ENCODE measurements at regions of chr18 and their contacts with region 1.

Region 1: GRCh38 chr18:62714671-62715435 is 488 bp upstream of the PHLPP1 start:
- DNase-seq: peak; percentile 88
- H3K4me3 Mint-ChIP-seq: peak overlapping the region; percentile 89
- H3K27ac Mint-ChIP-seq: peak overlapping the region; percentile 89
- H3K4me1 Mint-ChIP-seq: peaks cover 27% of the 10 kb centered on the region
- H3K27me3 Mint-ChIP-seq: peaks cover 24% of the 10 kb centered on the region

Region 2: DNA sequence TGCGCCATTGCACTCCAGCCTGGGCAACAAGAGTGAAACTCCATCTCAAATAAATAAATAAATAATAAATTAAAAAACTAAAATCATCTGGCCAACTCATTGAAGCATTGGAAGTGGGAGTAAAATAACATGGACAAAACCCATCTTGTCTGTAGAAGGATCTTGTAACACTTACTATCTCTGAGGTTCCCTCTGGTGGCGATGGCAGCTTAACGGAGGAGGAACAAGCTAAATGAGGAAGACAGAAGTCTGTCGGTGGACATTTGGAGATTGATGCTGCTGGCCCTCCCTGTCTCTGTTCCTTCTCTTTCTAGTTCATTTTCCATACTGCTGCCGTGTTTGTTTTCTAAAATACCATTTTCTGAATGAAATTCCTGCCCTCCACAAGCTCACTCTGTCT is 148.7 kb before region 1 on chr18:
- CTCF ChIA-PET with region 1: no interaction called
- POLR2A ChIA-PET with region 1: no interaction called
- DNase-seq: no peak
- H3K4me3 Mint-ChIP-seq: no peak overlapping the region
- H3K27ac Mint-ChIP-seq: peak overlapping the region; percentile 4
- H3K4me1 Mint-ChIP-seq: peaks cover 5% of the 10 kb centered on the region
- H3K27me3 Mint-ChIP-seq: no peaks in the 10 kb centered on the region

Region 3: DNA sequence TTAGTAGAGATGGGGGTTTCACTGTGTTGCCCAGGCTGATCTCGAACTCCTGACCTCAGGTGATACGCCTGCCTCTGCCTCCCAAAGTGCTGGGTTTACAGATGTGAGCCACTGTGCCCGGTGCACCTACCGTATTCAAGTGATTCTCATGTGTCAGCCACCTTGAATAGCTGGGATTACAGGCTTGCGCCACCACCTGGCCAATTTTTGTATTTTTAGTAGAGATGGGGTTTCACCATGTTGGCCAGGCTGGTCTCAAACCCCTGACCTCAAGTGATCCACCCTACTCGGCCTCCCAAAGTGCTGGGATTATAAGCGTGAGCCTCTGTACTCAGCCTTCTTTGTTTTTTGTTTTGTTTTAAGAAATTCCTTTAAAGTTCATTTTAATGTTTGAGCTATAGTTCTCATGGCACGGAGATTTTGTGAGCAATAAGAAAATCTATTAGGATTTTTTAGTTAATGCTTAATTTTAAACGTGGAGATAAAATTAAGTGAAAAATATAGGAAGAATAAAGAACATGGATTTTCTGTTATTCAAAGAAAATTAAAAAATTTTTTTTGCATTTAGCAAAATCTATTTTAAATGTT is 243.1 kb after region 1 on chr18:
- CTCF ChIA-PET with region 1: interaction called, 21 read pairs
- POLR2A ChIA-PET with region 1: no interaction called
- DNase-seq: peak; percentile 56
- H3K4me3 Mint-ChIP-seq: no peak overlapping the region
- H3K27ac Mint-ChIP-seq: no peak overlapping the region
- H3K4me1 Mint-ChIP-seq: peaks cover 14% of the 10 kb centered on the region
- H3K27me3 Mint-ChIP-seq: no peaks in the 10 kb centered on the region

Region 4: DNA sequence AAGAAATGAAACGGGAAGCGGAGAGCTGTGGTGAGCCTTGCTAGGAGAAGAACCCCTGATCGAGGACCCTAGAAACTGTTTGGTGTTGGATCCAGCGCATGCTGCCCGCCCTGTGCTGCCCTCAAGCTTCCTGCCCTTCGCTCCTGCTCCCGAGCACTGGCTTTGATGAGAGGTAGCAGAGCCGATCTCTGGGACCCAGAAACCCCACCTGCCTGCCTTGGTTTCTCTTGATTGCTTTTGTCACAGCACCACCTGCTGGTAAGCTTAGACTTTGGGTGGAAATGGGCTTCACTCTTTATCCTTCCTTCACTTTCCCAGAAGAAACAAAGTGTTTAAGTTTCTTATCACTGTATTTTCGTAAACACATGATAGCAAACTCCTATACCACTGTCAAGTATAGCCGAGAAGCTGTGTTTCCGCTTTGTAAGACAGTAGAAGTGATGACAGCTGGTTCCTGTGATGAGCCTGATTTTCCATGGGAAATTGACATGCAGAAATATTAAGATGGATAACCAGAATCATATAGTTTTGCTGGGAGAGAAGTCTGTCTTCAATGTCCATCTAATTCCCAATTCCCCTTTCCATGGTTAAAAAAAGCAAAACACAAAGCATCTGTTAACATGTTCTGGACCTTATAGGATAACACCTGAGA is 267.9 kb after region 1 on chr18:
- CTCF ChIA-PET with region 1: interaction called, 15 read pairs
- POLR2A ChIA-PET with region 1: no interaction called
- DNase-seq: peak; percentile 68
- H3K4me3 Mint-ChIP-seq: peak overlapping the region; percentile 18
- H3K27ac Mint-ChIP-seq: no peak overlapping the region
- H3K4me1 Mint-ChIP-seq: peaks cover 5% of the 10 kb centered on the region
- H3K27me3 Mint-ChIP-seq: no peaks in the 10 kb centered on the region